Body of pancreas (tissue), 4 donors: ENCODE measurements at regions of chr6 and their contacts with region 1.

Region 1: GRCh38 chr6:52598123-52598823 is 21.4 kb upstream of the TRAM2 start:
- DNase-seq: peak; percentile 50 to 60 (median 56)
- ATAC-seq: peak; percentile 78
- H3K4me3 ChIP-seq: no peak overlapping the region
- H3K27ac ChIP-seq: no peak overlapping the region
- H3K4me1 ChIP-seq: peaks cover 3% of the 10 kb centered on the region
- H3K27me3 ChIP-seq: no peaks in the 10 kb centered on the region
- CTCF ChIP-seq: peak; percentile 22 to 69 (median 59)
- POLR2A ChIP-seq: no peak

Region 2: DNA sequence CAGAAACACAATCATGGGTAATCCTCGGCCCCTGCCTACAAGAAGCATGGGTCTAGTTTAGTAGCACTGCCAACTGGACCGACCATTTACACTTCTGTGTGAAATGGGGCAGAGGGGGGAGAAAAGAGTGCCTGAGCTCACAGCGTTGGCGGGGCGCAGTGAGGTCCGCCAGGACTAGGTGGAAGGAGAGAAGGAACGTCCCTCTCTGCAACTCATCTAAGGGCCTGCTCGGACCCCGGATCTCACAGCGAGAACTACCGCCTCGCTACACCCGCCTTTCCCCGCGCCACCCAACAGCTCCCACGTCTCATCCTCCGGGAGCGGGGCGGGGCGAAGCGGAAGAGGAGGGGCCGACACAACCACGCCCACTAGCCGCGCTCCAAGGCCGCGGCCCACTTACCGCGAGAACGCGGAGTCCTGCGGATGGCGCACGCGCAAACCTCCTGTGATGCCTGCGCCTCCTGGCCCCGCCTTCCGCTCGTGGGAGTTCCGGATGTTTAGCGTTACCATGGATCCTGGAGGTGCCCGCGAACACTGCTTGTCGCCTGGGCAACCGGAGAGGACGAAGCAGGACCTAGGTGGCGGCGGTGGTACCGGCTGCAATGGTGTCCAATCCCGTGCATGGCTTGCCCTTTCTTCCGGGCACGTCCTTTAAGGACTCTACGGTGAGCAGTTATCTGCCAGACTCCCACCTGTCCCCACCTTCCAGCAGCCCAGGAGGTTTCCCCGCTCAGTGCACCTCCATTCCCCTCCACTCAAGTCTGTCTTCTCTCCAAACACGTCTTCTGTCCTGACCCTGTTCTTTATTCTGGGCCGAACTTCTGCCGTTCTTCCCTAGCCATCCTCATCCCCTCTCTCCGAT is 178.2 kb before region 1 on chr6 and contains the start of gene EFHC1:
- intact Hi-C with region 1: loop called (anchors 10 kb)
- DNase-seq: peak; percentile 99 to 100 (median 100)
- ATAC-seq: peak; percentile 99
- H3K4me3 ChIP-seq: peak within 1 kb of the TSS; percentile 18 to 45
- H3K27ac ChIP-seq: peak within 1 kb of the TSS; percentile 44 to 80 (median 73)
- H3K4me1 ChIP-seq: peaks cover 15% of the 10 kb centered on the region
- H3K27me3 ChIP-seq: no peaks in the 10 kb centered on the region
- CTCF ChIP-seq: no peak
- POLR2A ChIP-seq: peak; percentile 46 to 82 (median 78)
- total RNA-seq, gene EFHC1: 11.5 to 17.4 TPM

Region 3: DNA sequence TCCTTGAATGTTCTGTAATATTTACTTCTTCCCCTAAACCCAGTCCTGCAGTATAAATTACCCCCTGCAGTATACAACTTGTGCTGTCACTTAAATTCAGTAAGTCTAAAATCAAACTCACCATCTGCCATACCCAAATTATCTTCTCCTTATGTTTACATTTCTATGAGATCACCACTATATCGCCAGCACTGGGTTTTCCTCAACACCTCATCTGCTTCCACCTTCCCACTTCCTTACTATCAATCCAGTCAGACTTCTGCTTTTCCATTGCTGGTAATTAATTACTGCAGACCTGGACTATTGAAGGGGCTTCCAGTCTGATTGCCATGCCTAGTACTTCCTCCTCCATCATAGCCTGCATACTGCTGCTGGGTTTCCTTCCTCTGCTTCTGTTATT is 162.9 kb before region 1 on chr6:
- intact Hi-C with region 1: no loop called
- DNase-seq: no peak
- ATAC-seq: no peak
- H3K4me3 ChIP-seq: no peak overlapping the region
- H3K27ac ChIP-seq: no peak overlapping the region
- H3K4me1 ChIP-seq: no peaks in the 10 kb centered on the region
- H3K27me3 ChIP-seq: no peaks in the 10 kb centered on the region
- CTCF ChIP-seq: no peak
- POLR2A ChIP-seq: no peak

Region 4: GRCh38 chr6:52887910-52888535 is 289.8 kb after region 1 on chr6:
- intact Hi-C with region 1: no loop called
- DNase-seq: no peak
- ATAC-seq: no peak
- H3K4me3 ChIP-seq: no peak overlapping the region
- H3K27ac ChIP-seq: no peak overlapping the region
- H3K4me1 ChIP-seq: peaks cover 7% of the 10 kb centered on the region
- H3K27me3 ChIP-seq: no peaks in the 10 kb centered on the region
- CTCF ChIP-seq: no peak
- POLR2A ChIP-seq: no peak